Left cardiac atrium (tissue), 4 donors: ENCODE measurements at regions of chr7 and their contacts with region 1.

Region 1: DNA sequence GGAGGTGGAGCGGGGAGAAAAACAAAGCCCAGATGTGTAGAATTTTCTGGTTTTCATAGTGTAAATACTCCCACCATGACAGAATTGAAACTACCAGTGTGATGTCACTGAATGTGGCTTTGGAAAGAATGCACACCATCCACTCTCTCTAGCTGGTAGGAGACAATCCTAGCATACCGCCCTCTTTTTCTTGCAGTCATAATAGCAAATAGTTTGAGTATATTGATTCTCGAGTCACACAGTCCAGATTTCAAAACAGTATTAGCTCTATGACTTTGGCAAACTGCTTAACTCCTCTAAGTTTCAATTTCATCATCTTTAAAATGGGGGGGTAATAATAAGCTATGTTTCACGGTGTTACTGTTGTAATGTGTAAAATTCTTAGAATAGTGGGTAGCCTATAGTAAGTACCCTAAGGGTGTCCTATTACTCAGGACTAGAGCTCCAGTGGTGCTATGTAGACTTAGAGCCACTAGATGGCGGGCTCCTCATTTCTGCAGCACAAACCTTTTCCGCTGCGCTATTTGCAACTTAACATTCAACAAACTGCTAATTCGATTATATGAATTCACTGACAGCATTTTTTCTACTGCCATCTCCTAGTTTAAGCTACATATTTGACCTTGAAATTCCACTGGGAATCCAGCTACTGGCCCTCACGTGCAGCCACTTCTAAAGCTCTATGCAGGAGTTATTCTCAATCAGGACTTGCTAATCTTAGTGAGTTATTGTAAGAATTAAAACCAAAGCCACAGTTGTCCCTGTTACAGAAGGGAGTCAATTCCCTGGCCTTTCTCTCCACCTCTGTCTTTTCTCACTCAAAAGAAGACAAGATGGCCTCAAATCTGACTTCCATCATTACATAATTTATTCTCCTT is 18.7 kb downstream of the TAS2R40 start:
- DNase-seq: peak; percentile 65
- ATAC-seq: peak; percentile 91 to 92

Region 2: GRCh38 chr7:142932386-142933091 is 308.0 kb before region 1 on chr7:
- intact Hi-C with region 1: no loop called
- DNase-seq: no peak
- ATAC-seq: no peak

Region 3: DNA sequence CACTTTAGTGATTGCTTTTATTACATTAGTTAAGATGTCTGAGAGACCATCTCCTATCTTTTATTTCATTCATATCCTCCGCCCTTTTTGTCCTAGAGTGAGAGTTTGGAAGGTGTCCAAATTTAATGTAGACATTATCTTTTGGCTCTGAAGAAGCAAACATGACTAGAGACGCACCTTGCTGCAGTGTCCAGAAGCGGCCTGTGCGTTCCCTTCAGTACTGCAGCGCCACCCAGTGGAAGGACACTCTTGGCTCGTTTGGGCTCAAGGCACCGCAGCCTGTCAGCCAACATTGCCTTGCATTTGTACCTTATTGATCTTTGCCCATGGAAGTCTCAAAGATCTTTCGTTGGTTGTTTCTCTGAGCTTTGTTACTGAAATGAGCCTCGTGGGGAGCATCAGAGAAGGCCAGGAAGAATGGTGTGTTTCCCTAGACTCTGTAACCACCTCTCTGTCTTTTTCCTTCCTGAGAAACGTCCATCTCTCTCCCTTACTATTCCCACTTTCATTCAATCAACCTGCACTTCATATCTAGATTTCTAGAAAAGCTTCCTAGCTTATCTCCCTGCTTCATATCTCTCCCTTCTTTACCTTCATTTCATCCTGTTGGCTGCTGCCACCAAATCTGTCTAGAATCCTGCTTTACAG is 65.0 kb after region 1 on chr7:
- intact Hi-C with region 1: loop called (anchors 1 to 5 kb)
- DNase-seq: peak; percentile 78
- ATAC-seq: peak; percentile 83 to 89

Region 4: DNA sequence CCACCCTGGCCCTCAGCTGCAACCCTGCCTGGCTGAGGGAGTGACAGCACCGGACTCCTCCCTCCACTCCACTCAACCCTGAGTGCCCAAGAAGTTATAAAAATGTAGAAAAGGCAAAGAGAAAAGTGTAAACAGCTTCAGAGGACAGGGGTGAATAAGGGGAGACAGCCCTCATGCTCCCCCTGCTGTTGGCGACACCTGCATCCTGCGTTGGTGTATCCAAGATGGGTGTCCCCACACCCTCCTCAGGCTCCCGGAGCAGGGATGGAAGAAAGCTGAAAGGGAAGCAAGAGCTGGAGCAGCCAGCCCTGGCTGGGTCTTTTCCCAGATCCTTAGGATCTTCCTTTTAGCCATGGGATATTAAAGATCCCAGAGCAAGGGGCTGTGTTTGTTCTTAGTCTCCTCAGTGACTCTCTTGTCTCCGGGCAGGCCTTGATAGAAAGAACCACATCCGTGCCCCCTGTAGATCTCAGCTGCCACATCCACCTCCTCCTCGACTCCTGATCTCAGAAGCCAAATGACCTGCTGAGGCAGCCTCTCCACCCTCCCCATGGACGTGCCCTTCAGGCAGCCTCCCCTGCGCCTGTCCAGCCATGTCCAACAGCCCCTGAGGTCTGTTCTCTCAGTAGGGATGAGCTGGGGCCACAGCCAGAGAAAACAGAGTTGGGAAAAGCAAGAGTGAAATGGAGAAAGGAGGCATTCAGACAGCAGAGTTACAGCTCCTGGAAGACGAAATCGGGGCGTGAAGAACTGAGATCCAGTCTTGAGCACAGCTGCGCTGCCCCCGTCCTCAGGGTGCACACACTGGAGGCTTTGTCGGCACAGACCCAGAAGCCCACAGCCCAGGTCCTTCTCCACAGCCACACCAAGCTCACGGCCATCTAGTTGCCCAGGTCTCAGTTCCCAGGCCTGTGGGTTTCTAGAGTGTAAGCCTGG is 115.2 kb after region 1 on chr7:
- intact Hi-C with region 1: loop called in 1 of 2 experiments (anchors 10 kb)
- DNase-seq: no peak
- ATAC-seq: no peak